GM12878 (cell line): ENCODE measurements at regions of chr4 and their contacts with region 1.

Region 1: GRCh38 chr4:73620115-73620792 is at the start of gene RASSF6:
- DNase-seq: no peak
- ATAC-seq: peak; percentile 91
- H3K4me3 ChIP-seq: peak within 1 kb of the TSS; percentile 61
- H3K27ac ChIP-seq: no peak within 1 kb of the TSS
- H3K4me1 ChIP-seq: no peaks in the 10 kb centered on the region
- H3K27me3 ChIP-seq: no peaks in the 10 kb centered on the region
- CTCF ChIP-seq: no peak
- EP300 ChIP-seq: no peak
- POLR2A ChIP-seq: no peak
- RAD21 ChIP-seq: no peak
- polyA plus RNA-seq, gene RASSF6: 0.35 to 0.40 TPM

Region 2: DNA sequence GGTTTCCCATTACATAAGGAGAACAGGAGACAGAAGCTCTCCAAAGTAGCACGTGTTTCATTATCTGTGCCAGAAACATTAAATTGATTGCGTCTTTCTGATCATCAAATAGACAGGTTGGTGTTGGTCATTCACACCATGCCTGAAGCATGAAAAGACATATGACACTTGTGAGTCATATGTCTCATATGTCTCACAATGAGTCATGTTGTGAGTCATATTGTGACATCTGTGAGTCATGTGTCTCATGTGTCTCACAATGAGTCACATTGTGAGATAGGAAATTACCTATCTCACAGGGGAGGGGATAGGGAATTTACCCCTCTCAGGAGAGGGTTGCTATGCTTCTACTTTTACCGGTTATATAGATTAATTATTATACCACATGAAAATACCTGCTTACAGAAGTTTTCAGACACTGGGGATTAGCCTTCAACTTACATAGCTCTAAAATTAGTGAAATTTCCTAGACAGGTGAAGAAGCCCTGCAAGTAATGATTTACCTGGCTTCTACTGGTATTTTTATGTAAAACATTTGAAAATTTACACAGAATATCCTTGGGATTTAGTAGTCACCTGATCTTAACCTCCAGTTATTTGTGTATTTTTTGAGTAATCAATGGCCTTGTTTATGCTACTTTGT is 1507.6 kb before region 1 on chr4:
- CTCF ChIA-PET with region 1: no interaction called
- POLR2A ChIA-PET with region 1: no interaction called
- RAD21 ChIA-PET with region 1: no interaction called
- SMC1A ChIA-PET with region 1: no interaction called
- in situ Hi-C with region 1: loop called (anchors 25 kb)
- intact Hi-C with region 1: no loop called
- DNase-seq: peak; percentile 88
- ATAC-seq: peak; percentile 94
- H3K4me3 ChIP-seq: no peak overlapping the region
- H3K27ac ChIP-seq: peak overlapping the region; percentile 32; the same call in 1 of the 2 replicates
- H3K4me1 ChIP-seq: no peaks in the 10 kb centered on the region; the same call in 1 of the 2 replicates
- H3K27me3 ChIP-seq: no peaks in the 10 kb centered on the region
- CTCF ChIP-seq: no peak
- EP300 ChIP-seq: peak; percentile 100
- POLR2A ChIP-seq: no peak
- RAD21 ChIP-seq: 0 out of 2 replicates have a peak, but pooled peaks have one; percentile 4

Region 3: DNA sequence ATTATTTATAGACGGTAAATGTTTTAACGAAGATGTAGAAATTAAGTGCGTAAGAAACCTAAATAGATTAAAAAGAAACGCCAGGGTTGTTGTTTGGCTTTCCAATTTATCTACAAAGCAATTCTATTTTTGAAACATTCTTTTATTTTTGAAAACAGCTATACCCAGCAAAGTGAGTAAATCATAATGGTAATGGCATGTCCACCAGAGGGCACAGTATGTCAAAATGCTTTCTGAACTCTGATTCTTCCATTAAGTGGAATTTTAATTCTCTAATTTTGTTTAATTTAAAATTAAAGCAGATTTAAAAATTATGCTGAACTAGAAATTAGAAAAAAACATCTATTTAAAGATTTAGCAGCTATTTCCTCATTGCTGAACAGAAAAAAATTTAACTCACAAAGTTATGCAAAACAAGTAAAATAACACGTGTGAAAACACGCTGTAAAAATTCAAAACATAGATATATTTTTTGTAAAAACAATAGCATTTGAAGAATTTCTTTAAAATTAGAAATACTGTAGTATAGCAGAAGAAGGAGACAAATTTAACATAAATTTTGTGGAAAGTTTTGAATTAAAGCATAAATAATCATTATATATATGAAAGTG is 26.5 kb before region 1 on chr4:
- CTCF ChIA-PET with region 1: interaction called, 14 read pairs
- POLR2A ChIA-PET with region 1: interaction called, 10 read pairs
- RAD21 ChIA-PET with region 1: interaction called, 24 read pairs
- SMC1A ChIA-PET with region 1: interaction called, 146 read pairs
- in situ Hi-C with region 1: no loop called
- intact Hi-C with region 1: loop called (anchors 2 kb)
- DNase-seq: no peak
- ATAC-seq: no peak
- H3K4me3 ChIP-seq: no peak overlapping the region
- H3K27ac ChIP-seq: no peak overlapping the region
- H3K4me1 ChIP-seq: peaks cover 23% of the 10 kb centered on the region
- H3K27me3 ChIP-seq: no peaks in the 10 kb centered on the region
- CTCF ChIP-seq: peak; percentile 43 to 49 (median 48); a peak in 5 of 6 replicates
- EP300 ChIP-seq: no peak
- POLR2A ChIP-seq: no peak
- RAD21 ChIP-seq: peak; percentile 59

Region 4: DNA sequence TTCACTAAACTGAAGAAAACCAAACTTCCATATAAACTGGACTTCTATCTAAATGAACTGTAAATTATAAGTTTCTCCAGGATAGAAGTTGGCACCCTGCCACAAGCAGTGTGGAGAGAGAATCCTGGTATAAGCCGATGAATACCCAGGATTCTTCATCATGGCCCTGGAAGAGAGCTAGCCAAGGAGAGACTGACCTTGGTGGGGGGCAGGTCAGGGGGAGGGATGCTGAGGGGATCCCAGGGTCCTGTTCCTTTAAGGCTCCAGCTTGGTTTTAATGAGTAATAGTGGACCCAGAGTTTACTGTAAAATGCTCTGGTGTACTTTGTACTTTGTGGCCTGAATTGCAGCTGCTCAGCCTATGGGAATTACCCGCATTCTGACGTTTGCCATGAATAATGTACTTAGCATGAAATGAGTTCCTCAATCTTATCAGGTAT is 17.0 kb before region 1 on chr4:
- CTCF ChIA-PET with region 1: interaction called, 17 read pairs
- POLR2A ChIA-PET with region 1: interaction called, 52 read pairs
- RAD21 ChIA-PET with region 1: interaction called, 39 read pairs
- SMC1A ChIA-PET with region 1: interaction called, 146 read pairs
- in situ Hi-C with region 1: no loop called
- intact Hi-C with region 1: no loop called
- DNase-seq: no peak
- ATAC-seq: peak; percentile 76
- H3K4me3 ChIP-seq: no peak overlapping the region
- H3K27ac ChIP-seq: no peak overlapping the region
- H3K4me1 ChIP-seq: peaks cover 16% of the 10 kb centered on the region
- H3K27me3 ChIP-seq: no peaks in the 10 kb centered on the region
- CTCF ChIP-seq: no peak
- EP300 ChIP-seq: peak; percentile 89 to 90; a peak in 3 of 4 replicates
- POLR2A ChIP-seq: no peak
- RAD21 ChIP-seq: no peak

Region 5: GRCh38 chr4:73608689-73609594 is 11.3 kb before region 1 on chr4:
- CTCF ChIA-PET with region 1: interaction called, 17 read pairs
- POLR2A ChIA-PET with region 1: interaction called, 52 read pairs
- RAD21 ChIA-PET with region 1: interaction called, 39 read pairs
- SMC1A ChIA-PET with region 1: interaction called, 44 read pairs
- in situ Hi-C with region 1: no loop called
- intact Hi-C with region 1: no loop called
- DNase-seq: no peak
- ATAC-seq: peak; percentile 25
- H3K4me3 ChIP-seq: no peak overlapping the region
- H3K27ac ChIP-seq: no peak overlapping the region
- H3K4me1 ChIP-seq: peaks cover 13% of the 10 kb centered on the region
- H3K27me3 ChIP-seq: no peaks in the 10 kb centered on the region
- CTCF ChIP-seq: no peak
- EP300 ChIP-seq: no peak
- POLR2A ChIP-seq: no peak
- RAD21 ChIP-seq: no peak

Region 6: GRCh38 chr4:73735231-73735630 is 115.0 kb after region 1 on chr4:
- CTCF ChIA-PET with region 1: no interaction called
- POLR2A ChIA-PET with region 1: no interaction called
- RAD21 ChIA-PET with region 1: no interaction called
- SMC1A ChIA-PET with region 1: no interaction called
- in situ Hi-C with region 1: no loop called
- intact Hi-C with region 1: no loop called
- DNase-seq: peak; percentile 79
- ATAC-seq: peak; percentile 92
- H3K4me3 ChIP-seq: no peak overlapping the region
- H3K27ac ChIP-seq: no peak overlapping the region
- H3K4me1 ChIP-seq: peaks cover 18% of the 10 kb centered on the region
- H3K27me3 ChIP-seq: no peaks in the 10 kb centered on the region
- CTCF ChIP-seq: no peak
- EP300 ChIP-seq: peak; percentile 99
- POLR2A ChIP-seq: no peak
- RAD21 ChIP-seq: no peak